ENCODE measurements at regions of chr18 and their contacts with region 1.

Region 1: GRCh38 chr18:12947355-12948041 is at the start of gene SEH1L:
- DNase-seq: peak; percentile 100
- ATAC-seq: peak; percentile 88
- H3K4me3 Mint-ChIP-seq: peak within 1 kb of the TSS; percentile 95
- H3K27ac Mint-ChIP-seq: peak within 1 kb of the TSS; percentile 99
- H3K4me1 Mint-ChIP-seq: peaks cover 39% of the 10 kb centered on the region
- H3K27me3 Mint-ChIP-seq: no peaks in the 10 kb centered on the region
- CTCF ChIP-seq: no peak
- total RNA-seq, gene SEH1L: 105 to 110 TPM

Region 2: DNA sequence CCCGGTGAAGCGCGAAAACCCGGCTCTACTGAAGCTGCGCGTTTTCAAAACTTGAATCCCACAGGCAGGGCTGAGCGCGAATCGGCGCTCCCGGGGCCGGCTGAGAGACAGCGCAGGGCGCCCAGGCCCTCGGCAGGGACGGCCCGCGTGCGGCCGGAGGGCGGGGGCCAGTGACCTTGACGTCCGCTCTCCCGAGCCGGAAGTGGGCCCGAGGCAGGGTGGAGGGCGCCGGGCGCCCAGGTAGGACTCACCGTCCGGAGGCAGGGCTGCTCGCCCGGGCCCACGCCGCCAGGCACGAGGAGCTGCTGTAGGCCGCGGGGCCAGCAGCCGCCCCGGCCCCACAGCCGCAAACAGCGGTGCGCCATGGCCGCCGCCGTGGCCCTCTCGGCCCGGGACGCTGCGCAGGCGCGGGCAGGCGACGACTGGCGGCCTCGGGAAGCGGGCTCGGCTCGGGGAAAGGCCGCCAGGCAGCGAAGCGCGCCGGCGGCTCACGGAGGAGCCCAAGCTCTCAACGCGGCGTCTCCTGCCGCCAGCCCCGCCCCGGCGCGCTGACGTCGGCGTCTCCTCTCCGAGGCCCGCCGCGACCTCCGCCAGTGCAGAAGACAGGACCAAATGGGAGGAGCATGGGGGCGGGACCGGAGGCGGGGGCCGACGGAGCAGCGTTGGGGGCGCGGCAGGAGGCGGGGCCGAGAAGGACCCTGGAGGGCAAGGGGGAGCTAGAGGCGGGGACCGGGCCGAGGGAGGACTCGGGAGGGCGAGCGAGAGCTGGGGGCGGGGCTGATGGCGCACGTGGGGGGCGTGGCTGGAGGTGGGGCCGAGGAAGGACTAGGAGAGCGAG is 570.6 kb before region 1 on chr18 and contains the start of gene AFG3L2:
- CTCF ChIA-PET with region 1: no interaction called
- POLR2A ChIA-PET with region 1: no interaction called
- intact Hi-C with region 1: loop called (anchors 10 kb)
- DNase-seq: peak; percentile 100
- ATAC-seq: peak; percentile 93
- H3K4me3 Mint-ChIP-seq: peak within 1 kb of the TSS; percentile 82
- H3K27ac Mint-ChIP-seq: peak within 1 kb of the TSS; percentile 94
- H3K4me1 Mint-ChIP-seq: peaks cover 40% of the 10 kb centered on the region
- H3K27me3 Mint-ChIP-seq: no peaks in the 10 kb centered on the region
- CTCF ChIP-seq: no peak
- total RNA-seq, gene AFG3L2: 60.6 to 64.0 TPM

Region 3: GRCh38 chr18:12904012-12904516 is 43.4 kb before region 1 on chr18:
- CTCF ChIA-PET with region 1: no interaction called
- POLR2A ChIA-PET with region 1: no interaction called
- intact Hi-C with region 1: no loop called
- DNase-seq: peak; percentile 77
- ATAC-seq: peak; percentile 82
- H3K4me3 Mint-ChIP-seq: peak overlapping the region; percentile 48
- H3K27ac Mint-ChIP-seq: peak overlapping the region; percentile 60
- H3K4me1 Mint-ChIP-seq: peaks cover 4% of the 10 kb centered on the region
- H3K27me3 Mint-ChIP-seq: no peaks in the 10 kb centered on the region
- CTCF ChIP-seq: no peak